Activated naive CD8-positive, alpha-beta T cell treated with anti-CD3 and anti-CD28 coated beads, Interleukin-2, amount 10 ng/mL, durations not matched to agents 7 days and 5 days (primary cell): ENCODE measurements at regions of chr13 and their contacts with region 1.

Region 1: DNA sequence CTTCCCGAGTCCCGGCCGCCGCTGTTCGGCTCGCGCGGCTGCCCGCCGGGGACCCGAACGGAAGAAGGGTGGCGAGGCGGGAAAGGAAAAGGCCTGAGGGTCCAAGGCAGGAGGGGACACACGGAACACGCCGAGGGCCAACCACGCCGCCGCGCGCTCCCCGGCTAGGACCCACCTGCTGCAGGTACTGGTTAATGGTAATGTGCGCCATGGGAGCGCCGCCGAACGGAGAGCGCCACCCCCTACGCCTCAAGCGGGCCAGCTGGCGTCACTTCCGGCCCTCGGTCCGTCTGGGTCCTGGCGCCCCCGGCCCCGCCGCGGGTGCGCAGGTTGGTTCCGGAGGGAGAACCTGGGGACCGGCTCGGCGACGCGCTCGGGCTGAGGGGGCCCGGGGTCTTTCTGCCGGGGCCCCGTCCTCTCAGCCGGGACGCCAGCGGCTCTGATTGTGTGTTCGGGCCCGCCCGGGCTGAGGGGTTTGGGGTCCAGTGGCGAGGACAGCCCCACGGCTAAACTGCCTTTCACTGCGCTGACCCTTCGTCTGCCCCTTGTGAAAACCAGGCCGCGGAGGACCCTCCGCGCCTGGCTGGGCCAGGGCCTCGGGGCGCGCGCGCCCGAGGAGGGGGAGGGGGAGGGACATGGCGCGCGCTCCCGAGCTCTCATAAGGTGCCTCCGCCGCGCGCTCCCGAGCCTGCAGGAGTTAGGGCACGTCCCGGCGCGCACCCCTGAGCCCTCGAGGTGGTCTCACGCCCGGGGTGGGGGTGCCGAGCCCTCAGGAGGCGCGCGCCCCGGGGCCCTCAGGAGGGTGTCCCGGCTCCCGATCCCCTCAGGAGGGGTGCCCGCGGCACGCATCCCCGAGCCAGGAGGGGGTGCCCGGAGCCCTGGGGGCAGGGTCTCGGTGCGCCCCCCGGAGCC is at the start of gene PCID2:
- DNase-seq: peak; percentile 97
- ATAC-seq: peak; percentile 69
- H3K4me3 Mint-ChIP-seq: peak within 1 kb of the TSS; percentile 88
- H3K27ac Mint-ChIP-seq: peak within 1 kb of the TSS; percentile 82
- H3K4me1 Mint-ChIP-seq: peaks cover 51% of the 10 kb centered on the region
- H3K27me3 Mint-ChIP-seq: no peaks in the 10 kb centered on the region
- total RNA-seq, gene PCID2: 59.3 to 60.8 TPM

Region 2: DNA sequence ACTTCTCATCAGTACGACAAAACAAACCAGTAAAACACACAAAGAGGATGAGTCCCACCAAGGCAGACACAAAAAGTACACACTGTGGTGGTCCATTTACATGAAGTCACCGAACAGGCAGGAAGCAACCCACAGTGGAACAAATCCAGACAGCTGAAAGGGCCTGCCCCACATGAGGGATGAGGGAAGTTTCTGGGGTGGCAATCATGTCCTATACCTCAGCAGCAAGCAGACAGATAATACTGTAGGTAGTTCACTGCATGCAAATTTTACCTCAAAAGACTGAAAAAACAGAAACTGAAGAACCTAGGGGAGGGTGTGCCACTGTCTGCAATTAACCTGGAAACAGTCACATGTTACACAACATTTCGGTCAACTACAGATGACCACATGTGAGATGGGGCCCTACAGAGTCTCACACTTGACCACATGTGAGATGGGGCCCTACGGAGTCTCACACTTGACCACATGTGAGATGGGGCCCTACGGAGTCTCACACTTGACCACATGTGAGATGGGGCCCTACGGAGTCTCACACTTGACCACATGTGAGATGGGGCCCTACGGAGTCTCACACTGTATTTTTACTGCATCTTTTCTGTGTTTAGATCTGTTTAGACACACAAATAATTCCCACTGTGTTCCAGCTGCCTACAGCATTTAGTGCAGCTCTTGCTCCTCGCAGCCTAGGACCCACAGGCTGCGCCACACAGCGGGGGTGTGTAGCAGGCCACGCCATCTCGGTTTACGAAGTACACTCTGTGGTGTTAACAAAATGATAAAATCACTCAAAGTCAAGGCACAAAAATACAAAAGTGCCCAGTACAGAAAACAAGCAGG is 22.4 kb before region 1 on chr13:
- POLR2A ChIA-PET with region 1: interaction called, 16 read pairs
- DNase-seq: no peak
- ATAC-seq: peak; percentile 25
- H3K4me3 Mint-ChIP-seq: no peak overlapping the region
- H3K27ac Mint-ChIP-seq: peak overlapping the region; percentile 66
- H3K4me1 Mint-ChIP-seq: peaks cover 33% of the 10 kb centered on the region
- H3K27me3 Mint-ChIP-seq: no peaks in the 10 kb centered on the region

Region 3: DNA sequence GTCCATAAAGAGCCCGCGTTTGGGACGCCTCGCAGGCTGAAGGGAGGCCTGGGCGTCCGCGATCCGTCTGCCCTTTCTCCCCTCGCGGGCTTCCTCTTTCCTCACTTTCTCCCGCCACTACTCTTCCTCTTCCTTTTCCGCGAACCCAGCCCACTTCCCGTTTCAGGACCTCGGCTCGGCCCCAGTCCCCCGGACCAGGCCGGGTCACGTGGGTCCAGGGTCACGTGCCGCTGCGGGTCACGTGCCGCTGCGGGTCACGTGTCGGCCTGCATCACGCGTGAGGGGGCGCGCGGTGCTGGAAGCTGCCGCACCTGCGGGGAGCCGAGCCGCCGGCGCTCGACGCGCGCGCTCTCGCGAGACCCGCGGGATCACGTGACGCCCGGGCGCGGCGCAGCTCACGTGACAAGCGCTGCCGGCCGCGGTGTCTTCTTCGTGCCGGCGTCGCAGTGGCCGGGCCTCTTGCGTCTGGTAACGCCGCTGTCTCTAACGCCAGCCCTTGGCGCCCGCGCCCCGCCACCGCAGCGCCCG is 88.2 kb after region 1 on chr13 and contains the start of gene LAMP1:
- POLR2A ChIA-PET with region 1: interaction called, 14 read pairs
- DNase-seq: peak; percentile 100
- ATAC-seq: peak; percentile 81
- H3K4me3 Mint-ChIP-seq: peak within 1 kb of the TSS; percentile 96
- H3K27ac Mint-ChIP-seq: peak within 1 kb of the TSS; percentile 100
- H3K4me1 Mint-ChIP-seq: peaks cover 31% of the 10 kb centered on the region
- H3K27me3 Mint-ChIP-seq: peaks cover 24% of the 10 kb centered on the region
- total RNA-seq, gene LAMP1: 90.1 to 96.5 TPM

Region 4: GRCh38 chr13:113506025-113506685 is 297.5 kb after region 1 on chr13:
- POLR2A ChIA-PET with region 1: no interaction called
- DNase-seq: no peak
- ATAC-seq: no peak
- H3K4me3 Mint-ChIP-seq: no peak overlapping the region
- H3K27ac Mint-ChIP-seq: no peak overlapping the region
- H3K4me1 Mint-ChIP-seq: peaks cover 4% of the 10 kb centered on the region
- H3K27me3 Mint-ChIP-seq: no peaks in the 10 kb centered on the region